Ovary (tissue), 10 donors: ENCODE measurements at regions of chr2 and their contacts with region 1.

Region 1: GRCh38 chr2:231411831-231412617 is 16.5 kb downstream of the B3GNT7 start:
- DNase-seq: peak; percentile 89 to 95 (median 93)
- H3K4me3 ChIP-seq: peak overlapping the region; percentile 67
- H3K27ac ChIP-seq: peak overlapping the region in 1 of 2 donors; percentile 36
- H3K4me1 ChIP-seq: peaks cover 5% of the 10 kb centered on the region
- H3K27me3 ChIP-seq: no peaks in the 10 kb centered on the region
- CTCF ChIP-seq: peak; percentile 85 to 94 (median 91)
- EP300 ChIP-seq: no peak
- POLR2A ChIP-seq: peak; percentile 21

Region 2: GRCh38 chr2:231297108-231297908 is 114.7 kb before region 1 on chr2:
- intact Hi-C with region 1: loop called (anchors 5 to 10 kb)
- DNase-seq: peak; percentile 49 to 76 (median 57)
- H3K4me3 ChIP-seq: no peak overlapping the region
- H3K27ac ChIP-seq: no peak overlapping the region
- H3K4me1 ChIP-seq: no peaks in the 10 kb centered on the region
- H3K27me3 ChIP-seq: no peaks in the 10 kb centered on the region
- CTCF ChIP-seq: peak; percentile 27 to 54 (median 42)
- EP300 ChIP-seq: no peak
- POLR2A ChIP-seq: no peak